GM13977 (cell line): ENCODE measurements at regions of chr7 and their contacts with region 1.

Region 1: DNA sequence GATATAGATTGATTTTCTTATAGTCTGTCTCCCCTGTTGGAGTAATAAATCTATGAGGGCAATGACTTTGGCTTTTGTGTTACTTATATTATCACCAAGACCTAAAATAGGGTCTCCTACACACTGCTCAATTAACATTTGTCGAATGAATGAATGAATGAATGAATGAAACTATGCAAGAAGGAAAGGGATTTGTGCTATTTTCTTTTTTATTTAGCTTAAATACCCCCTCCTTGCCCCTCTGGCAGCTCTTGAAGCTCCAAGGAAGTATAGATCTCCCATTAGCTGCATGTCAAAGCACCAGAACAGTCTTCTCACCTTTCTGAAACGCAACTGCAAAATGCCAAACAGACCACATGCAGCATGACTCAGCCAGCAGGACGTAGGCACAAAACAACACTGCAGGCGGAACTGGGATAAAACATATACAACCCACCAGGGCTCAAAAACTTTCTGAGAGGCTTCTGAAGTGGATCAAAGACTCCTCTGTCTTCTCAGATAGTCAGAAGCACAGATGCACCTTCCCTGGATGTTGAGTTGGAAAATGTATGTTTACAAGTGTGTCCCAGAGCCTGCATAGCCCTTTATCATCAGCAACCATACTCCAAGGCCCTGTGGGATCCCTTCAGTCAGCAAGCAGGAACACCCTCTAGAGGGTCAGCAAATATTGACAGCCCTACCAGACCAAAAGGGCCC is 187.8 kb downstream of the NPSR1 start:
- DNase-seq: no peak
- CTCF ChIP-seq: no peak

Region 2: DNA sequence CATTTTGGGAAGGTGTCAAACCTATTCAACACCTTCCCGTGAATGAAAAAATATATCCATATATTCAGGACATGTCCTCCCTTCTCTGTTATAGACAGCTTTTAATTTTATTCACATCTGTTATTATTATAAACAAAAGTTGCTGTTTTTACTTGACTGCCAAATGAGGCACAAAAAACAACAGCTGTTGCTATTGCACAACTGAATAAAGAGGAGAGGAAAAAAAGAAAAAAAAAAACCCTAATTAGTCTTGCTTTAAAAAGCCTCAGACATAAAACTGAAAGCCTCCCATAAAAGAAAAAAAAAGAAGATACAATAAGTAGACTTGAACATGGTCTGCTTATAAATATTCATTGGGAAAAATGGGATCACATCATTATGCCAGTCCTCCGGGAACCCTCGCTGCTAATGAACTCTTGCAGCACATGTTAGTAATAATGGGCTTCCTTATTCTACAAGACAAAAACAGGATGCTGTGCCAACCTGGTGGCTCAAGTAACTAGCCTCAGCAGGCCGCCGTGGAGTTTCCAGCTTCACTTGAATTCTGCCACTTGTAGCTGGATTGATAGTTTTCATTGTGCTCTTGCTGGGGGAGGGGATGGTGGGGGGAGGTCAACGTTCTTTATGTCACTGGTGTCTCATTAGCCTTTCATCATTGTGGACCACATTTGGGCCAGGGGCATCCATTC is 786.9 kb before region 1 on chr7:
- in situ Hi-C with region 1: no loop called
- DNase-seq: no peak
- CTCF ChIP-seq: no peak

Region 3: GRCh38 chr7:34612661-34613060 is 233.2 kb before region 1 on chr7:
- in situ Hi-C with region 1: no loop called
- DNase-seq: no peak
- CTCF ChIP-seq: no peak

Region 4: GRCh38 chr7:35037526-35038339 is 191.9 kb after region 1 on chr7:
- in situ Hi-C with region 1: loop called (anchors 25 kb)
- DNase-seq: peak; percentile 97
- CTCF ChIP-seq: peak; percentile 92

Region 5: GRCh38 chr7:35356495-35356894 is 510.7 kb after region 1 on chr7:
- in situ Hi-C with region 1: no loop called
- DNase-seq: no peak
- CTCF ChIP-seq: no peak